Activated CD4-positive, alpha-beta T cell treated with anti-CD3 and anti-CD28 coated beads, Interleukin-2, amount 10 ng/mL, durations not matched to agents 24 days and 14 days (primary cell): ENCODE measurements at regions of chr3 and their contacts with region 1.

Region 1: DNA sequence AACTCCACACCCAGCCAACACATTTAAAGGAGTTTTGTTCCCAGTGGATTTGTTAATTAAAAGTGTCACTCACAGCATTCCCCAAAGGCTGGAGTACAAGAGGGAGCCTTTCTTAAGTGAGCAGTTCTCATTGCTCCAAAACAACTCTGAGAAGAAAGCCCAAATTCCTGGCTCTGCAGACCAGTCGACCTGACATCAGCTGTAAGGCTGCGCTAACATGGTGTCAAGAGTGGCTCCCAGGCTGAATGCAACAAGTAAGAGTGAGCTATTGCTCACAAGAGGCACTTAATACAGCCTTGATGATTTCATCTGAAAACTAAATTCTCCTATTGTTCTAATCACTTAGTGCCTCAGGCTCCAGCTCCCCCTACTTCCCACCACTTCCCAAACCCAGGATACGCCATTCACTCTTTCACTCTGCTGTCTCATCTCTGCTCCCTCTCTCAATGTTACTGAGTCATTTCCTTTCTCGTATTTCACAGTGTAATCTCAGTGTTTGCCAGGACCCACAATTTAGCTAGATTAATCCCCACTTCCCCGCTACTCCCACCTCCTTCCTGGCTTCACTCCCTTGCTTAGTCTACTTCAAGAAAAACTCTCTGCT is 81.8 kb downstream of the WWTR1 start:
- DNase-seq: no peak
- H3K4me3 Mint-ChIP-seq: no peak overlapping the region
- H3K27ac Mint-ChIP-seq: no peak overlapping the region
- H3K4me1 Mint-ChIP-seq: peaks cover 45% of the 10 kb centered on the region
- H3K27me3 Mint-ChIP-seq: no peaks in the 10 kb centered on the region

Region 2: DNA sequence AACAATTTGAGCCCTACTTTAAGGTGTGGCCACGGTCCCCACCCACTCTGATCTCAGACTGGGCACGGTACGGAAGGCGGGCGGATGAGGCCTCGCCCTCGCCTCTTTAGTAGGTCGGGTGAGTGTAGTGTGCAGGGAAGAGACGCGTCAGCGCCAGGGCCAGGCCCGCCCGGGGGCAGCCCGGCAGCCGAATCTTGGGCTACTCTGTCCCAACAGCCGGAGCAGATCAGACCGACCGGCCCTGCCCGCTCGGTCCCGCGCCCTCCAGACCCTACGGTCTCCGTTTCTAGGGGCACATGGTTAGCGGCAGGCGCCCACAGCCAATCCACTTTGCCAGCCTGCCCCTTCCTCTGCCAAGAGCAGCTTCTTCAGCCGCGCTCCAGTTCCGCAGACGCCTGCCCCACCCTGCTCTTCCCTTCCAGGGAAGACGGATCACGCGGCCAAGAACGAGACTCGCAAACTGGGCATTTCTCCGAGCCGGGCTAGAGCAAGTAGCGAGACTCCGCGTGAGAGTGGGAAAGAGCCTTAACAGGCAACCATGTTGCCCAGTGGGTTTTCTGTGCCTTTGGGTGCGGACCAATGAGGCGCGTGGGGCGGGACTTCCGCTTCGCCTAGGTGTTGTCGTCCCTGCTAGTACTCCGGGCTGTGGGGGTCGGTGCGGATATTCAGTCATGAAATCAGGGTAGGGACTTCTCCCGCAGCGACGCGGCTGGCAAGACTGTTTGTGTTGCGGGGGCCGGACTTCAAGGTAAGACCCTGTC is 236.7 kb after region 1 on chr3 and contains the start of gene RNF13:
- intact Hi-C with region 1: loop called (anchors 5 kb)
- DNase-seq: peak; percentile 98
- H3K4me3 Mint-ChIP-seq: peak within 1 kb of the TSS; percentile 97
- H3K27ac Mint-ChIP-seq: peak within 1 kb of the TSS; percentile 100
- H3K4me1 Mint-ChIP-seq: peaks cover 44% of the 10 kb centered on the region
- H3K27me3 Mint-ChIP-seq: peaks cover 11% of the 10 kb centered on the region
- total RNA-seq, gene RNF13: 31.6 and 36.7 TPM in 2 replicates